Activated CD4-positive, alpha-beta memory T cell treated with anti-CD3 and anti-CD28 coated beads for 36 hours (primary cell): ENCODE measurements at regions of chr2 and their contacts with region 1.

Region 1: DNA sequence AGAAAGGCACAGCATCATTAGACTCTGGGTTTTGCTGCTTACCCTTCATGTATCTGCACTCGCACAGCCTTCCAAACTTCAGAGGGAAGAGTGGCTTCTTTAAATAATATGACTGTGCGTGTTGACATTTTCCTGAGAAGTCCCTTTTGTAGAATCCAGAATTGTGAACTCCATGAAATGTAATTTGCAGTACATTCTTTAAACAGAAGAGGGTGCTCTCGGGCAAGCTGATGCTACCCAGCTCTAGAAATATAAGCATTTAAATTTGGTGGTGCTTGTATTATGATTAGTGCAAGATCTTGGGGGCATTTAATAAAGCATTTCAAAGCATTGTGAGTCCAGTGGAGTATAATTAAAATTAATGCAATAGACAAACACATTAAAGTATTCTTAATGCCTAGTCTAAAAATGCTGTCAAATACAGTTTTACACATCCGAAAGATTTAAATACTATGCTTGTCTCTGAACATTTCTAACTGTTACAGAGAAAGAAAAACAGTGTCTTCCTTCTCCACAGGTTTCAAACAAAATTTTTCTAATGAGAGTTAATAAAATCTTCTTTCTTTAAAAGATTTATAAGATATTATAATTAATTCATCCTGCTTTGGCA is 17.3 kb upstream of the GTF2A1L start:
- DNase-seq: no peak
- H3K4me3 Mint-ChIP-seq: no peak overlapping the region
- H3K27ac Mint-ChIP-seq: no peak overlapping the region
- H3K4me1 Mint-ChIP-seq: no peaks in the 10 kb centered on the region
- H3K27me3 Mint-ChIP-seq: peaks cover 4% of the 10 kb centered on the region

Region 2: GRCh38 chr2:48624696-48625095 is 24.4 kb after region 1 on chr2:
- CTCF ChIA-PET with region 1: no interaction called
- POLR2A ChIA-PET with region 1: no interaction called
- intact Hi-C with region 1: no loop called
- DNase-seq: no peak
- H3K4me3 Mint-ChIP-seq: no peak overlapping the region
- H3K27ac Mint-ChIP-seq: no peak overlapping the region
- H3K4me1 Mint-ChIP-seq: no peaks in the 10 kb centered on the region
- H3K27me3 Mint-ChIP-seq: no peaks in the 10 kb centered on the region

Region 3: DNA sequence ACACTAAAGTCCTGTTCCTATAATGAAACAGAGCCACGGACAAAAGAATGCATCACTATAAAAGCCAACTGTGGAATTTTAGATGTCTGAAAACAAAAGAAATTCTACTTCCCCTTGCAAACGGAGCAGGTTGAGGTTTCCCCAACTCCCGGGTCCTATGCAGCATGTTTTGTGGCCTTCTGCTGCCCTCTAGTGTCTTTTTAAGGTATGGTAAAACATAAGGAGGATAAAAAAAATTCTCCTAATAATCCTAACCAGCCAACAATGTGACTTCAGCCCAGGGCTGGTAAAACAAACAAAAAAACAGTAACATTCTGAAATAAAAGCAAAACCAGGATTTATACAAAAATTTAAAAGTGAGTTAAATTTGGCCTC is 1892.2 kb after region 1 on chr2:
- CTCF ChIA-PET with region 1: no interaction called
- POLR2A ChIA-PET with region 1: no interaction called
- intact Hi-C with region 1: loop called (anchors 5 kb)
- DNase-seq: peak; percentile 17
- H3K4me3 Mint-ChIP-seq: no peak overlapping the region
- H3K27ac Mint-ChIP-seq: no peak overlapping the region
- H3K4me1 Mint-ChIP-seq: peaks cover 18% of the 10 kb centered on the region
- H3K27me3 Mint-ChIP-seq: no peaks in the 10 kb centered on the region